K562 (cell line): ENCODE measurements at regions of chr9 and their contacts with region 1.

Region 1: DNA sequence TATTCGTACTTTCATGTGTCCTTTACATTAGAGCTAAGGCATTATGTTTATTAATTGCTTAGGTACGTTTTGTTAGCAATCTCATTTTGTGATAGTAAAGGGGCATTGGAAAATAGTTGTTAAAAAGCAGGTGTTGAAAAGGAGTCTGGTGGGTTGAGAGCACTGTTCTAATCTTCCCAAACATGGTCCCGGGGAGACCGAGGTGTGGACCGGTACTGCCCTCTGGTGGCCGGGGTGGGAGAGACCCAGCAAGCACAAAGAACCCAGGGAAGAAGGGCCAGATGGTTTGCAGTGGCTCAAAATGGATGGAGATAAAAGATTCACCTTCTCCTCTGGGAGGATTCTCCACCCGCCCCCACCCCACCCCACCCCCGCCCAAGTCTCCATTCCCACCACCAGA is 26.1 kb downstream of the IDNK start:
- DNase-seq: peak; percentile 71 to 76 (median 72)
- ATAC-seq: peak; percentile 95
- H3K4me3 ChIP-seq: no peak overlapping the region
- H3K27ac ChIP-seq: no peak overlapping the region
- H3K4me1 ChIP-seq: peaks cover 0 to 4% of the 10 kb centered on the region in 2 experiments; a peak in 2 of 5 replicates
- H3K27me3 ChIP-seq: no peaks in the 10 kb centered on the region
- CTCF ChIP-seq: peak; percentile 70 to 76 (median 72)
- EP300 ChIP-seq: no peak
- POLR2A ChIP-seq: no peak
- RAD21 ChIP-seq: peak; percentile 62 to 64

Region 2: GRCh38 chr9:83583151-83584014 is 65.7 kb before region 1 on chr9:
- CTCF ChIA-PET with region 1: no interaction called
- POLR2A ChIA-PET with region 1: no interaction called
- in situ Hi-C with region 1: no loop called
- intact Hi-C with region 1: loop called (anchors 2 kb)
- DNase-seq: peak; percentile 41 to 50 (median 46)
- ATAC-seq: peak; percentile 87
- H3K4me3 ChIP-seq: no peak overlapping the region
- H3K27ac ChIP-seq: no peak overlapping the region
- H3K4me1 ChIP-seq: no peaks in the 10 kb centered on the region
- H3K27me3 ChIP-seq: no peaks in the 10 kb centered on the region
- CTCF ChIP-seq: peak; percentile 39 to 67 (median 58); a peak in 5 of 6 replicates
- EP300 ChIP-seq: no peak
- POLR2A ChIP-seq: no peak
- RAD21 ChIP-seq: peak in 1 of 2 experiments; percentile 12; a peak in 1 of 4 replicates

Region 3: GRCh38 chr9:83617299-83617698 is 31.8 kb before region 1 on chr9:
- CTCF ChIA-PET with region 1: interaction called, 3 read pairs
- POLR2A ChIA-PET with region 1: no interaction called
- in situ Hi-C with region 1: no loop called
- intact Hi-C with region 1: loop called (anchors 1 kb)
- DNase-seq: no peak
- ATAC-seq: no peak
- H3K4me3 ChIP-seq: no peak overlapping the region
- H3K27ac ChIP-seq: no peak overlapping the region
- H3K4me1 ChIP-seq: no peaks in the 10 kb centered on the region; a peak in 1 of 5 replicates
- H3K27me3 ChIP-seq: no peaks in the 10 kb centered on the region
- CTCF ChIP-seq: no peak
- EP300 ChIP-seq: no peak
- POLR2A ChIP-seq: no peak
- RAD21 ChIP-seq: no peak

Region 4: GRCh38 chr9:83622939-83623678 is 26.0 kb before region 1 on chr9 and contains the start of gene IDNK:
- CTCF ChIA-PET with region 1: interaction called, 3 read pairs
- POLR2A ChIA-PET with region 1: interaction called, 3 read pairs
- in situ Hi-C with region 1: no loop called
- intact Hi-C with region 1: loop called (anchors 1 kb)
- DNase-seq: peak; percentile 47 to 81 (median 67)
- ATAC-seq: peak; percentile 90
- H3K4me3 ChIP-seq: peak within 1 kb of the TSS; percentile 65
- H3K27ac ChIP-seq: peak within 1 kb of the TSS; percentile 72
- H3K4me1 ChIP-seq: peaks cover 11 to 14% of the 10 kb centered on the region in 2 experiments; a peak in 3 of 5 replicates
- H3K27me3 ChIP-seq: no peaks in the 10 kb centered on the region
- CTCF ChIP-seq: no peak
- EP300 ChIP-seq: no peak
- POLR2A ChIP-seq: peak; percentile 77
- RAD21 ChIP-seq: no peak
- polyA plus RNA-seq, gene IDNK: 0.50 to 0.62 TPM